Activated B cell treated with CpG ODN at 0.5 μM for 24 hours (primary cell): ENCODE measurements at regions of chr17 and their contacts with region 1.

Region 1: GRCh38 chr17:64025732-64026294 is 5.4 kb upstream of the ICAM2 start:
- DNase-seq: peak; percentile 72
- ATAC-seq: peak; percentile 92
- H3K4me3 Mint-ChIP-seq: peak overlapping the region; percentile 73
- H3K27ac Mint-ChIP-seq: peak overlapping the region; percentile 62
- H3K4me1 Mint-ChIP-seq: peaks cover 42% of the 10 kb centered on the region
- H3K27me3 Mint-ChIP-seq: no peaks in the 10 kb centered on the region
- CTCF ChIP-seq: peak; percentile 80

Region 2: GRCh38 chr17:62791751-62792445 is 1233.9 kb before region 1 on chr17:
- CTCF ChIA-PET with region 1: no interaction called
- POLR2A ChIA-PET with region 1: no interaction called
- intact Hi-C with region 1: no loop called
- DNase-seq: no peak
- ATAC-seq: no peak
- H3K4me3 Mint-ChIP-seq: no peak overlapping the region
- H3K27ac Mint-ChIP-seq: no peak overlapping the region
- H3K4me1 Mint-ChIP-seq: peaks cover 12% of the 10 kb centered on the region
- H3K27me3 Mint-ChIP-seq: peaks cover 6% of the 10 kb centered on the region
- CTCF ChIP-seq: no peak

Region 3: DNA sequence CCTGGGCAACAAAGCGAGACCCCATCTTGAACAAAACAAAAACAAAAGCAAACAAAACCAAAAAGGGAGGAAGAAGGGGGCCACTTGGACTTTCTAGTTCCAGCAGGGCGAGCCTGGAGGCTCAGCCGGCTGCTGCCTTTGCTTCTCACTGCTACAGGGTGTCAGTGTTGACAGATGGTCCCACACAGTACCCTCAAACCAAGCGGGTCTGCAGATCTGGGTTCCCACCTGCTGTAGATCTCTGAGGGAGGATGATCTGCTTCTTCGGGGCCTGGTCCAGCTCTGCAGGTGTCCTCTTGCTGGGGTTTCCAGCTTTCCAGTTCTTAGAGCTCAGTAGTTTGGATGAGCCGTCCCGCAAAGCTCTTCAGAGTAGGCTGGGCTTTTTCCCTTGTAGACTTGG is 121.5 kb before region 1 on chr17:
- CTCF ChIA-PET with region 1: interaction called, 80 read pairs
- POLR2A ChIA-PET with region 1: no interaction called
- intact Hi-C with region 1: no loop called
- DNase-seq: peak; percentile 10
- ATAC-seq: no peak
- H3K4me3 Mint-ChIP-seq: no peak overlapping the region
- H3K27ac Mint-ChIP-seq: no peak overlapping the region
- H3K4me1 Mint-ChIP-seq: peaks cover 4% of the 10 kb centered on the region
- H3K27me3 Mint-ChIP-seq: no peaks in the 10 kb centered on the region
- CTCF ChIP-seq: no peak

Region 4: GRCh38 chr17:63919311-63919723 is 106.5 kb before region 1 on chr17:
- CTCF ChIA-PET with region 1: interaction called, 116 read pairs
- POLR2A ChIA-PET with region 1: interaction called, 45 read pairs
- intact Hi-C with region 1: loop called (anchors 1 kb)
- DNase-seq: peak; percentile 65
- ATAC-seq: peak; percentile 49
- H3K4me3 Mint-ChIP-seq: peak overlapping the region; percentile 77
- H3K27ac Mint-ChIP-seq: peak overlapping the region; percentile 75
- H3K4me1 Mint-ChIP-seq: peaks cover 85% of the 10 kb centered on the region
- H3K27me3 Mint-ChIP-seq: no peaks in the 10 kb centered on the region
- CTCF ChIP-seq: no peak

Region 5: GRCh38 chr17:63946440-63947367 is 79.1 kb before region 1 on chr17:
- CTCF ChIA-PET with region 1: interaction called, 79 read pairs
- POLR2A ChIA-PET with region 1: interaction called, 41 read pairs
- intact Hi-C with region 1: loop called (anchors 1 kb)
- DNase-seq: peak; percentile 67
- ATAC-seq: peak; percentile 72
- H3K4me3 Mint-ChIP-seq: peak overlapping the region; percentile 74
- H3K27ac Mint-ChIP-seq: peak overlapping the region; percentile 91
- H3K4me1 Mint-ChIP-seq: peaks cover 47% of the 10 kb centered on the region
- H3K27me3 Mint-ChIP-seq: no peaks in the 10 kb centered on the region
- CTCF ChIP-seq: no peak

Region 6: DNA sequence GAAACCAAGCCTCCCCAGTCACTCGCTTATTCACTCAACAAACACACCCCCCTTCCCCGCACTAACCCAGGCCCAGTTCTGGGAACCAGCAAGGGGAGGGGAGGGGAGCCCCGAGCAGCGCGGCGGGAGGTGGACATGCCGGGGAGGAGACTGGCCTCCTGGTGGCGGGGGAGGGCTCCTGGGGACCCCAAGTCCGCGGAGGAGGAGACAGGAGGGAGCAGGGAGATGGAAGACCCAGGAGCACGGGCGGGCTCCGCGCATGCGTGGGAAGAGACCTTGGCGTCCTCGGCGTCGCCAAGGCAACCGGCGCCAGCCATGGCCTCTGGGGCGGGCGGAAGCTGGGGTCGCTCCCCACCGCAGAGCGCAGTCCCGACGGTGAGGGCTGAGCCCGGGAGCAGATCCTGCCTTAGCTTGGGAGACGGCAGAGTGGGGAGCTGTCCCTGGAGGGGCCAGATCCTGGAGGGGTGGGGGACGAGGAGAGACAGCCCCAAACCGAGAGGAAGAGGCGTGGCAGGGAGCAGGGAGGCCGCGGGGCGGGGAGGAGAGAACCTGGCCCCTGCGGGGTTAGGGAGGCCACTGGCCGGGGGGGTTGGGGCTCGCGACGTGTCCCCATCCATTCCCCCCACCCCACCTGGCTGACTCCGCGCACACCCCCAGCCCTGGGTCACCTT is 27.6 kb before region 1 on chr17 and contains the start of gene PRR29:
- CTCF ChIA-PET with region 1: interaction called, 17 read pairs
- POLR2A ChIA-PET with region 1: interaction called, 9 read pairs
- intact Hi-C with region 1: loop called (anchors 2 kb)
- DNase-seq: peak; percentile 67
- ATAC-seq: peak; percentile 73
- H3K4me3 Mint-ChIP-seq: peak within 1 kb of the TSS; percentile 87
- H3K27ac Mint-ChIP-seq: no peak within 1 kb of the TSS
- H3K4me1 Mint-ChIP-seq: peaks cover 32% of the 10 kb centered on the region
- H3K27me3 Mint-ChIP-seq: peaks cover 4% of the 10 kb centered on the region
- CTCF ChIP-seq: no peak
- total RNA-seq, gene PRR29: not detected in 2 replicates

Region 7: GRCh38 chr17:64117981-64118979 is 92.5 kb after region 1 on chr17:
- CTCF ChIA-PET with region 1: interaction called, 10 read pairs
- POLR2A ChIA-PET with region 1: interaction called, 4 read pairs
- intact Hi-C with region 1: no loop called
- DNase-seq: no peak
- ATAC-seq: no peak
- H3K4me3 Mint-ChIP-seq: no peak overlapping the region
- H3K27ac Mint-ChIP-seq: no peak overlapping the region
- H3K4me1 Mint-ChIP-seq: peaks cover 18% of the 10 kb centered on the region
- H3K27me3 Mint-ChIP-seq: no peaks in the 10 kb centered on the region
- CTCF ChIP-seq: no peak

Region 8: DNA sequence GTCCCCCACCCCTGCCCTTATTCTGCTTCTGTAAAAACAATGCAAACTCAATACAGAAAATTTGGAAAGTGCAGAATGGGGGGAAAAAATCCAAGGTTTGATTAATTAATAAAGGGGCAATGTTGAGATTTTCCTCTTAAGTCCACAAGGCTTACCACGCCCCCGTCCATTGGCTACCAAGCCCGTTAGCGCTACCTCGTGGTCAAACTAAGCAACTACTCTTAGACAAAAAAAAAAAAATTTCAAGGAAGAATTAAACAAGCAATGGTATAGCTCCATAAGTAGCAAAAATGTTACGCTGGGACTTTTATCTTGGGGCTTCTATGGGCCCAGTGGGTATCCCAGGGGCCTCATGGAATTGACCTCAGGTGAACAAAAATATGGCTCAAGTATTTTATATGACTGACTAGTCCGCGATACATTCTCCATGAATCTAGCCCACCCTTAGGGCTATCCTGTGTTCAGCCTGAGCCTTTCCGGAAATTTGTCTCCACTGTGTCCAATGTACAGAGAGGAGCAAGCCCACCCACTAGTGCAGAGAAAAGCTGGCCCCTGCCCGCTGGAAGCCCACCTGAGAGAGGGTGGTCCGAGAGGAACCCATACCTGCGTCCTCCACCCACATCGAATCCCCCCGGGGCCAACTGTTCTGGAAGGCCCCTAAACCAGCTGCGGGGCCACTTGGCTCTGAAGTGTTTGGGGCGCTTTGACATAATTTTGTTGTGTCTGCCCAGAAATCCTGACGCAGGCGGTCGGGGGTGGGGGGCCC is 256.3 kb after region 1 on chr17:
- CTCF ChIA-PET with region 1: interaction called, 14 read pairs
- POLR2A ChIA-PET with region 1: no interaction called
- intact Hi-C with region 1: loop called (anchors 1 kb)
- DNase-seq: no peak
- ATAC-seq: peak; percentile 58
- H3K4me3 Mint-ChIP-seq: no peak overlapping the region
- H3K27ac Mint-ChIP-seq: no peak overlapping the region
- H3K4me1 Mint-ChIP-seq: no peaks in the 10 kb centered on the region
- H3K27me3 Mint-ChIP-seq: no peaks in the 10 kb centered on the region
- CTCF ChIP-seq: no peak